CD8-positive, alpha-beta T cell (primary cell): ENCODE measurements at regions of chr6 and their contacts with region 1.

Region 1: DNA sequence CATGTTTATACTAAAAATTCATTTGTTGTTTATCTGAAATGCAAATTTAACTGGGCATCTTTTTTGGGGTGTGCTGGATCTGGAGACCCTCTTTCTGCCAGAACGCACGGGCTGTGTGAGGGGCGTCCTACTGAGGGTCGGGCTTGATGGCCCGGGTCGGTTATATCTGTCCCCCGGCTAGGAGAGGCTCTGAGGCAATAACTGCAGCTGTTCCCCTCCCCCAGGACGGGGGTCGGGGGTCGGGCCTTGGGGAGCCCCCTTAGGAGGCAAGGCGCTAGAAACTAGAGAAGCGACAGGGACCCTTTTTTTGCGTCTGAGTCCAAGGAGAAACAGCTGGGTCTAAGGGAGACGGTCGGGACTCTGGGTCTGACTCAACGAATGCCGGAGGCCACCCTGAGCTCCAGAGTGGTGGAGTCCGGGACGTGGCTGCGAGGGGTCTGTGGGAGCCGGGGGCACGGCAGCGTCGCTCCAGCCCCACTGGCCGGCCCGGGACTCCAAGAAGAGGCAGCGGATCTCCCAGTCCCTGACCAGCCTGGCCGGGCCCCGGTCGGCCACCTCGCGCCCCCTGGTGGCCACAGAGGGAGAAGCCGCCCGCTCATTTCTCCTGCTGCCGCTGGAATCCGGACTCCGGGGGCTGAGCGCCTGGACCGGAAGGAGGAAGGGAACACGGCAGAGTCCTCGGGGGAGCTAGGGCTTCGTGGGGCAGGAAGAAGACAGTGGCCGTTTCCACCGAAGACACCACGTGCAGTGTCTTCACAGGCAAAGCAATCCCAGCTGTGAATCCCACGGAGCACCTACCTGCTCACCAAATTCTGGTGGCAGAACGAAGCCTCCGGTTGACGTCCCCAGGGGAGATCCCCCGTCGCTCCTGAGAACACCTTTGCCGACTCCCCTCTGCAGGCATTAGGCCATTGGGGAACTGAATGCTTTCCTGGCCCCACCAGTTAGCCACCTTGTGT is 24.0 kb upstream of the SCML4 start:
- DNase-seq: peak; percentile 62 to 93 (median 79)
- ATAC-seq: peak; percentile 89
- H3K4me3 ChIP-seq: peak overlapping the region; percentile 54 to 62
- H3K4me3 Mint-ChIP-seq: peak overlapping the region; percentile 82
- H3K27ac ChIP-seq: peak overlapping the region in 1 of 2 experiments; percentile 43
- H3K27ac Mint-ChIP-seq: peak overlapping the region; percentile 85
- H3K4me1 ChIP-seq: peaks cover 14% of the 10 kb centered on the region
- H3K4me1 Mint-ChIP-seq: peaks cover 24% of the 10 kb centered on the region
- H3K27me3 ChIP-seq: no peaks in the 10 kb centered on the region
- H3K27me3 Mint-ChIP-seq: no peaks in the 10 kb centered on the region
- CTCF ChIP-seq: peak; percentile 97

Region 2: GRCh38 chr6:107698146-107698545 is 150.0 kb before region 1 on chr6:
- CTCF ChIA-PET with region 1: interaction called, 64 read pairs
- POLR2A ChIA-PET with region 1: interaction called, 3 read pairs
- intact Hi-C with region 1: no loop called
- DNase-seq: no peak
- ATAC-seq: no peak
- H3K4me3 ChIP-seq: no peak overlapping the region
- H3K4me3 Mint-ChIP-seq: no peak overlapping the region
- H3K27ac ChIP-seq: no peak overlapping the region
- H3K27ac Mint-ChIP-seq: peak overlapping the region; percentile 49
- H3K4me1 ChIP-seq: peaks cover 7% of the 10 kb centered on the region
- H3K4me1 Mint-ChIP-seq: peaks cover 37% of the 10 kb centered on the region
- H3K27me3 ChIP-seq: no peaks in the 10 kb centered on the region
- H3K27me3 Mint-ChIP-seq: no peaks in the 10 kb centered on the region
- CTCF ChIP-seq: no peak

Region 3: GRCh38 chr6:107731422-107732319 is 116.5 kb before region 1 on chr6:
- CTCF ChIA-PET with region 1: interaction called, 246 read pairs
- POLR2A ChIA-PET with region 1: interaction called, 12 read pairs
- intact Hi-C with region 1: loop called (anchors 1 kb)
- DNase-seq: peak in 6 of 9 experiments; percentile 37 to 74 (median 45)
- ATAC-seq: peak; percentile 31
- H3K4me3 ChIP-seq: peak overlapping the region; percentile 73 to 85
- H3K4me3 Mint-ChIP-seq: peak overlapping the region; percentile 88
- H3K27ac ChIP-seq: peak overlapping the region; percentile 43 to 83
- H3K27ac Mint-ChIP-seq: peak overlapping the region; percentile 94
- H3K4me1 ChIP-seq: peaks cover 82% of the 10 kb centered on the region
- H3K4me1 Mint-ChIP-seq: peaks cover 95% of the 10 kb centered on the region
- H3K27me3 ChIP-seq: no peaks in the 10 kb centered on the region
- H3K27me3 Mint-ChIP-seq: no peaks in the 10 kb centered on the region
- CTCF ChIP-seq: no peak

Region 4: GRCh38 chr6:107756660-107757355 is 91.3 kb before region 1 on chr6:
- CTCF ChIA-PET with region 1: interaction called, 32 read pairs
- POLR2A ChIA-PET with region 1: no interaction called
- intact Hi-C with region 1: no loop called
- DNase-seq: peak in 1 of 9 experiments; percentile 29
- ATAC-seq: peak; percentile 31
- H3K4me3 ChIP-seq: no peak overlapping the region
- H3K4me3 Mint-ChIP-seq: peak overlapping the region; percentile 0
- H3K27ac ChIP-seq: peak overlapping the region in 1 of 2 experiments; percentile 64
- H3K27ac Mint-ChIP-seq: peak overlapping the region; percentile 81
- H3K4me1 ChIP-seq: peaks cover 24% of the 10 kb centered on the region
- H3K4me1 Mint-ChIP-seq: peaks cover 63% of the 10 kb centered on the region
- H3K27me3 ChIP-seq: no peaks in the 10 kb centered on the region
- H3K27me3 Mint-ChIP-seq: no peaks in the 10 kb centered on the region
- CTCF ChIP-seq: no peak

Region 5: DNA sequence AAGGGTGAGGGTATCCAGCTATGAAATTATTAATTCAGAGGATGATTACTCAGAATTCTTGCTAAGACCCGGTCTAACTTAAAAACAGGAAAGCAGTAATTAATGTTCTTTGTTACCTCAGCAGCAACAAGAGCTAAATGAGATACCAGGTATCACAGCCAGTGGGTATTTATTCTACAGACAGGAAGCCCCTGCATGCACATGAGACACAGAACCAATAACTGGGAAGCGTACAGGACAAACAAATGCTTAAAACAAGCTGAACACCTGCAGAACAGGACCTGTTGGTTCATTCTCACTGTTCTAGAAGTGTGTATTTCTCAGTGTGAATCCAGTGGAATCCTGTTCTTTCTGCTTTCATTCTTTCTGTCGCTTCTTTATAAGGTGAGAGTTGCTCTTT is 54.9 kb before region 1 on chr6:
- CTCF ChIA-PET with region 1: interaction called, 34 read pairs
- POLR2A ChIA-PET with region 1: no interaction called
- intact Hi-C with region 1: no loop called
- DNase-seq: peak in 1 of 9 experiments; percentile 38
- ATAC-seq: peak; percentile 52
- H3K4me3 ChIP-seq: no peak overlapping the region
- H3K4me3 Mint-ChIP-seq: peak overlapping the region; percentile 55
- H3K27ac ChIP-seq: peak overlapping the region; percentile 21 to 45
- H3K27ac Mint-ChIP-seq: peak overlapping the region; percentile 84
- H3K4me1 ChIP-seq: peaks cover 64% of the 10 kb centered on the region
- H3K4me1 Mint-ChIP-seq: peaks cover 82% of the 10 kb centered on the region
- H3K27me3 ChIP-seq: no peaks in the 10 kb centered on the region
- H3K27me3 Mint-ChIP-seq: no peaks in the 10 kb centered on the region
- CTCF ChIP-seq: peak; percentile 16

Region 6: DNA sequence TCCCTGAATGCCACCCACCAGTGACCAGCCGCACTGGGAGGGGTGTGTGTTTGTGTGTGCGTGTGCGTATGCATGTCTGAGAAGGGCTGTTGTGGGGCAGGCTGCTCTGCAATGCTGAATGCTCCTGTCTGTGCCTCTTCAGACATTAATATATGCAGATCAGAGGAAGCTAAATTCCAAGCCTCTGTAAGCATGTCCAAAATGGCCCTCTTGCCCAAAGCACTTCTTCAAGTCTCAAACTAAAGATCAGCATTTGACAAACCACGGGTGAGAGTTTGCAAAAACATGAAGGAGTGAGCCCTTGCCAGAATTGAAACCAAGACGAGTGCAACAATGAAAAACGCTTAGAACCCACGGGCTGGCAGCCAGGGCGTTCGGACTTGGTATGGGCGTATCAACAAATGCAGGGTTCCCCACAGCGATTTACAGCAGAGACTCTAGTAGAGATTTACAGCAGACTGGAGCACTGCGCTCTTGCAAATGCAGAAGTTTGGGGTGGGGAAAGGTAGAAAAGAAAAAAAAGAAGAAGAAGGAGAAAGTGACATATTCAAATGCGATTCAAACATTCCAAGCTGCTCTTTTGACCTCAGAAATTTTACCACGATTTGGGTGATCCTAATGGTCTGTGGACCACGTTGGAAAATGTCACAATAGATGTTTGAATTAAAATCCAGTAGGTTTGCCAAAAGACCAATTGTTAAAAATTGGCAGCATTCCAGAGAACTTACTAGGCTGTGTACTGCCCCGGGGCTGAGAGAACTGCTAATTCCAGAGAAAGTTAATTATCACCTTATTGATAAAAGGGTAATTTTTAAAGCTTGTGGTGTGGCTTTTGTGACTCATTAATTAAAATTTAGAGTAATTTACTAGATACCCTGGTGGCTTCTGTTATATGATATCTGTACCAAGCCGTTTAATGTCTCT is 27.5 kb before region 1 on chr6:
- CTCF ChIA-PET with region 1: interaction called, 76 read pairs
- POLR2A ChIA-PET with region 1: interaction called, 38 read pairs
- intact Hi-C with region 1: loop called in 1 of 2 experiments (anchors 1 kb)
- DNase-seq: peak; percentile 15 to 78 (median 54)
- ATAC-seq: no peak
- H3K4me3 ChIP-seq: peak overlapping the region; percentile 72 to 92
- H3K4me3 Mint-ChIP-seq: peak overlapping the region; percentile 92
- H3K27ac ChIP-seq: peak overlapping the region; percentile 81 to 90
- H3K27ac Mint-ChIP-seq: peak overlapping the region; percentile 96
- H3K4me1 ChIP-seq: peaks cover 65% of the 10 kb centered on the region
- H3K4me1 Mint-ChIP-seq: peaks cover 82% of the 10 kb centered on the region
- H3K27me3 ChIP-seq: no peaks in the 10 kb centered on the region
- H3K27me3 Mint-ChIP-seq: no peaks in the 10 kb centered on the region
- CTCF ChIP-seq: no peak

Region 7: DNA sequence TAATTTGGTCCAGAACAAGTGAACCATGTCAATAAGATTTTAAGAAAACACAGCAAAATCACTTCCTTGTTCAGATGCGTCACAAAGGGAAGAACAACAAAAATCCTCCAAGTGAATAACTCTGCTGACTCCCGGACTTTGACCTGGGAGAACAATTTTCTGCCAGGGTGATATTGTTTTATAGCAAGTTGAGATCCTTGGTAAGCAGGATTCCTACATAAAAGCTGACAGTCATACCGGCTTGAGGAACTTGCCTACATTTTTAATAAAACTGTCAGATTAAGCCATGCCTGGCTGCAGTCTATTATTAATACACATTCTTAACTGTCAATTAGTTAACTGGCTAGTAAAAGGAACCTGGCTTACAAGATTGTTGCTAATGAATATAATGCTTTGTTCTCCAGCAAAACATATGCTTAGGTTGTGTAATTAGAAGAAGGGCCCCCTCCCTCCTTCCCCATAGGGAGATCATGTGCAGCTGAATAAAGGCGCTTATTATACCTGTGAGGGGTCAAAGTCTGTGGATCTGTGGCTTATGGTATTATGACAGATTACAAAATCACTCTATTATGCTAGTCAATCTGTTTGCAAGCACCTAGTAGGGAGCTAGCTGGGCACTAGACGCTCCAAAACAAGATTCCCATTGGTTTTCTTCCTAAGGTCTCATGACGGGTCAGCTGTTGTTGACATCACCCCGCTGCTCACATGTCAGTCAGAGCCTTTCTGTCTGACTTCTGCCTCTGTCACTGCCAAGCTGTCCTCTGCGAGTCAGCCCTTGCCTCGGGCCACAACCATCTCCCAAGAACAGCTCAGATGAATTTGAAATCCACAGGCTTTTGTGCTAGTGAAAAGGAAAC is 154.5 kb after region 1 on chr6:
- CTCF ChIA-PET with region 1: no interaction called
- POLR2A ChIA-PET with region 1: no interaction called
- intact Hi-C with region 1: no loop called
- DNase-seq: no peak
- ATAC-seq: no peak
- H3K4me3 ChIP-seq: no peak overlapping the region
- H3K4me3 Mint-ChIP-seq: no peak overlapping the region
- H3K27ac ChIP-seq: no peak overlapping the region
- H3K27ac Mint-ChIP-seq: no peak overlapping the region
- H3K4me1 ChIP-seq: no peaks in the 10 kb centered on the region
- H3K4me1 Mint-ChIP-seq: no peaks in the 10 kb centered on the region
- H3K27me3 ChIP-seq: no peaks in the 10 kb centered on the region
- H3K27me3 Mint-ChIP-seq: no peaks in the 10 kb centered on the region
- CTCF ChIP-seq: no peak

Region 8: DNA sequence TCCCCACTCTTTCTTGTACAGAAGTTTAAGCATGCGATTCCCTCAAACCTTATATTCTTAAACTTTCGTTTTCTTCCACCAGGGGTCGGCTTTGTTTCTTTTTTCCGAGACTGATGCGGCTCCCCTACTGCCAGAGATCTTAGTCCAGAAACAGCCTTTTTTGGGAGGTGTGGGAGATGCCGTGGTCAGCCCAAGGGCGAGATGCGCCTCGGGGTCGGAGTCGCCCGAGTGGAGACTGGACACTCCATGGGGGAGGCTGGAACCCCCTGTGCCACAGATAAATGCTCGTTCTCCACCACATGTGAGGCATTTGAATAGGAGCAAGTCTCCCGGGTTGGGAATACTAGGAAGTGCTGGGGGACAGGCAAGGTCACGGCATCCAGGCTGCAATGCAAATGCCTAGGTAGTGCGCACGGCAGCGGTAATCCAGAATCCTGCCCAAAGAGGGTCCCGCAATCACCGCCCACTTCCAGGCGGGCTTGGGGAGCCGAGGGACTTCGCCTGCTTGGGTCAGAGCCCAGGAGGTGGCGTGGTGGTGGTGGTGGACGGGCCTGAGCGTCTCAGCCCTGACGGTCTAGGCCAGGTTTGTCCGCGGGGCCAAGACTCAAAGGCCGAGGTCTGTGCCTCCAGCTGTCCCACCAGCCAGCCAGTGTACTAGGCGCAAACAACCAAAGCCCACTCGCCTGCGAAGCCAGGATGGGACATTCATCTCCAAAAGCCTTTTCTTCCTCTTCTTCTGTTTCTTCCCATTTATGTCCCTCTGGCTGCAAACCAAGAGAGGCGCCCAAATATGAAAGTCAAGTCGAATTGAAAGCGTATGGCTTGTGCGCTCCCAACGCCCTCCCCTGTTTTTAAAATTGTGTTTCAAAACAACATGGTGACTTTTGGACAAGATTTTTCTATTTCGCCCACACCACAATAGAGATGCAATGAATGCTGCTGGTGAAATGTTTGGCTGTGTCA is 265.7 kb after region 1 on chr6:
- CTCF ChIA-PET with region 1: no interaction called
- POLR2A ChIA-PET with region 1: no interaction called
- intact Hi-C with region 1: no loop called
- DNase-seq: peak in 2 of 9 experiments; percentile 43 to 49
- ATAC-seq: no peak
- H3K4me3 ChIP-seq: peak overlapping the region in 1 of 2 experiments; percentile 29
- H3K4me3 Mint-ChIP-seq: peak overlapping the region; percentile 64
- H3K27ac ChIP-seq: no peak overlapping the region
- H3K27ac Mint-ChIP-seq: no peak overlapping the region
- H3K4me1 ChIP-seq: peaks cover 40% of the 10 kb centered on the region
- H3K4me1 Mint-ChIP-seq: peaks cover 41% of the 10 kb centered on the region
- H3K27me3 ChIP-seq: peaks cover 36 to 43% of the 10 kb centered on the region in 2 experiments
- H3K27me3 Mint-ChIP-seq: peaks cover 74% of the 10 kb centered on the region
- CTCF ChIP-seq: peak; percentile 50